Activated CD4-positive, alpha-beta memory T cell treated with anti-CD3 and anti-CD28 coated beads, Interleukin-2, amount 10 ng/mL, durations not matched to agents 7 days and 5 days (primary cell): ENCODE measurements at regions of chr17 and their contacts with region 1.

Region 1: GRCh38 chr17:8138672-8139371 is 13.4 kb downstream of the PER1 start:
- DNase-seq: peak; percentile 97
- H3K4me3 Mint-ChIP-seq: no peak overlapping the region
- H3K27ac Mint-ChIP-seq: no peak overlapping the region
- H3K4me1 Mint-ChIP-seq: peaks cover 3% of the 10 kb centered on the region
- H3K27me3 Mint-ChIP-seq: peaks cover 3% of the 10 kb centered on the region

Region 2: DNA sequence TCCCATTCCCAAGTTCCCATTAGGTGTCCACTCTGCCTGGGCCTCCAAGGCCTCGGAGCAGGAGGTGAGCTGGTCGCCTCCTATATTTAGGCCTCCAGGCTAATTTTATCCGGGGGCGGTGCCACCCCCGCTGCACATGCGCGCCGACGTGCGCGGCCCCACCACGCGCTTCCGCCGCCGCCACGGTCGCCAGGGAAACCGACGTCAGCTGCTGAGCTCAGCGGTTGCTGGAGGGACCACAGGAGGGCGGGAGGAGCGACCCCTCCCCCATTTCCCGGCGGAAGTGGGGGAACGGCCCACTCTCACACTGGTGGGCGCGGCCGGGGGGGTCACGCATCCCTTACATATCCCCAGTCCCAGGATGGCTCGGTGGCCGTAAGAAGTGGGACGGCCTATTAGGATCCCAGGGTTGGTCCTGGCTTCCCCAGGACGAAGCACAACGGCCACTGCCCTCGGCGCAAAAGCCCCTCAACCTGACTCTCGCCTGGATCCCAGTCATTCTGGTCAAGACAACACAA is 12.4 kb after region 1 on chr17:
- CTCF ChIA-PET with region 1: interaction called, 24 read pairs
- POLR2A ChIA-PET with region 1: interaction called, 62 read pairs
- DNase-seq: peak; percentile 92
- H3K4me3 Mint-ChIP-seq: peak overlapping the region; percentile 84
- H3K27ac Mint-ChIP-seq: peak overlapping the region; percentile 84
- H3K4me1 Mint-ChIP-seq: peaks cover 35% of the 10 kb centered on the region
- H3K27me3 Mint-ChIP-seq: no peaks in the 10 kb centered on the region

Region 3: GRCh38 chr17:8162233-8162996 is 23.6 kb after region 1 on chr17 and contains the start of gene VAMP2:
- CTCF ChIA-PET with region 1: interaction called, 24 read pairs
- POLR2A ChIA-PET with region 1: interaction called, 62 read pairs
- DNase-seq: peak; percentile 89
- H3K4me3 Mint-ChIP-seq: peak within 1 kb of the TSS; percentile 81
- H3K27ac Mint-ChIP-seq: peak within 1 kb of the TSS; percentile 98
- H3K4me1 Mint-ChIP-seq: peaks cover 59% of the 10 kb centered on the region
- H3K27me3 Mint-ChIP-seq: no peaks in the 10 kb centered on the region
- total RNA-seq, gene VAMP2: 75.2 to 79.1 TPM

Region 4: DNA sequence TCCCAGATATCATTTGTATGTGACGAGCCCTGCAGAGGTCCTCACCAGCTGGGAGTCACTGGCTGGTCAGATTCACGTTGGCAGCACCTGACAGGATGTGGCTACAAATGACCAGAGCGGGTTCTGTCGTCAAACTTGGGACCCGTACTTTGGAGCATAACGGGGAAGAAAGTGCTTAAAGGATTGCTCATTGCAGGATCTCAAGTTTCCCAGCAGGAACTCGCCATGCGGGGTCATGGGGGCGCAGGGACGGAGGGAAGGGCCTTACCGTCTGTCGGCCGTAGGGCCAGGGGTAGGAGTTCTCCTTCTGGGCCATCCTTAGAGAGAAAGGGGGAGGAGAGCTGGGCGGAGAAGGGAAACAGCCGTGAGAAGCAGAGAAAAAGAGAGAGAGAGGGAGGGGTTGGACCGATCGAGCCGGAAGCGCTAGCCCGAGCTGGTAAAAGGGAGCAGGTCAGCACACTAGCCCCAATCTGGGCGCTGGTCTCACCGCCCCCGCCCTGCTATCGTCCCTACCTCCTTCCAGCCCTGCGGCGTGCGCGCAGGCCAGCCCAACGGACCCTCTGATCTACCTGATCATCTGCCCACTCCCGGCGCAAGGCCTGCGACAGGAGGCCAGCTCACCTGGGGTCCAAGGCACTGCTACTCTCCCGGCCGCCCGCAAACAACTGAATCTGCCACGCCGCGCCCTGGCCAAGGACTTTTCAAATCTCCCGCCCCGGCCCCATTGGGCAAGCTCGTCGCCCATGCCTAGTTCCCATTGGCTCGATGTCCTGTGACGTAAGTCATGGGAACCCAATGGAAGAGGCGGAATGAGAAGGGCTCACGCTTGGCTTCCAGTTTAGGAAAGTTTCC is 71.3 kb after region 1 on chr17 and contains the start of gene AURKB:
- CTCF ChIA-PET with region 1: no interaction called
- POLR2A ChIA-PET with region 1: interaction called, 13 read pairs
- DNase-seq: peak; percentile 94
- H3K4me3 Mint-ChIP-seq: peak within 1 kb of the TSS; percentile 87
- H3K27ac Mint-ChIP-seq: peak within 1 kb of the TSS; percentile 86
- H3K4me1 Mint-ChIP-seq: peaks cover 39% of the 10 kb centered on the region
- H3K27me3 Mint-ChIP-seq: no peaks in the 10 kb centered on the region
- total RNA-seq, gene AURKB: 160 to 167 TPM